ENCODE measurements at regions of chr1 and their contacts with region 1.

Region 1: GRCh38 chr1:94530373-94530878 is 11.1 kb downstream of the F3 start:
- DNase-seq: no peak

Region 2: DNA sequence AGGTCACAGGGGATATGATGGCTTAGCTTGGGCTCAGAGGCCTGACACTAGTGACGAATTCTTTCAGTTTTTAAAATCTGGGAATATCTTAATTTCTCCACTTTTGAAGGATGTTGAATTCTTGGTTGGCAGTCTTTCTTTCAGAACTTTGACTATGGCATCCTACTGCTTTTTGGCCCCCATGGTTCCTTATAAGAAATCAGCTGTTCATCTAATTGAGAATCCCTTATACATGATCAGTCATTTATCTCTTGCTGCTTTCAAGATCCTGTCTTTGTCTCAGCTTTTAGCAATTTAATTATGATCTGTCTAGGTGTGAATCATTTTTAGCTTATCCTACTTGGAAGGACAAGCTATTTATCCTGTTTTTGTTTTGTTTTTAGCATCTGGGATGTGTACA is 42.4 kb after region 1 on chr1:
- intact Hi-C with region 1: no loop called
- DNase-seq: no peak

Region 3: GRCh38 chr1:94595658-94596057 is 65.2 kb after region 1 on chr1:
- intact Hi-C with region 1: loop called in 1 of 2 experiments (anchors 2 kb)
- DNase-seq: no peak